ENCODE measurements at regions of chr6 and their contacts with region 1.

Region 1: GRCh38 chr6:159042003-159042825 is 2.6 kb downstream of the TAGAP start:
- DNase-seq: peak; percentile 35 to 65
- ATAC-seq: peak; percentile 72 to 93 (median 85)
- H3K4me3 ChIP-seq: peak overlapping the region; percentile 24
- H3K27ac ChIP-seq: no peak overlapping the region
- H3K4me1 ChIP-seq: no peaks in the 10 kb centered on the region
- H3K27me3 ChIP-seq: peaks cover 0 to 7% (median 2%) of the 10 kb centered on the region in 3 donors
- CTCF ChIP-seq: peak; percentile 94

Region 2: GRCh38 chr6:159104163-159104925 is 62.1 kb after region 1 on chr6:
- intact Hi-C with region 1: loop called in 1 of 2 experiments (anchors 2 kb)
- DNase-seq: peak; percentile 45 to 70
- ATAC-seq: peak; percentile 87 to 92 (median 89)
- H3K4me3 ChIP-seq: no peak overlapping the region
- H3K27ac ChIP-seq: no peak overlapping the region
- H3K4me1 ChIP-seq: no peaks in the 10 kb centered on the region
- H3K27me3 ChIP-seq: no peaks in the 10 kb centered on the region
- CTCF ChIP-seq: peak; percentile 75

Measured in psoas muscle (tissue), 8 donors.